Posterior vena cava (tissue), 2 donors: ENCODE measurements at regions of chr11 and their contacts with region 1.

Region 1: DNA sequence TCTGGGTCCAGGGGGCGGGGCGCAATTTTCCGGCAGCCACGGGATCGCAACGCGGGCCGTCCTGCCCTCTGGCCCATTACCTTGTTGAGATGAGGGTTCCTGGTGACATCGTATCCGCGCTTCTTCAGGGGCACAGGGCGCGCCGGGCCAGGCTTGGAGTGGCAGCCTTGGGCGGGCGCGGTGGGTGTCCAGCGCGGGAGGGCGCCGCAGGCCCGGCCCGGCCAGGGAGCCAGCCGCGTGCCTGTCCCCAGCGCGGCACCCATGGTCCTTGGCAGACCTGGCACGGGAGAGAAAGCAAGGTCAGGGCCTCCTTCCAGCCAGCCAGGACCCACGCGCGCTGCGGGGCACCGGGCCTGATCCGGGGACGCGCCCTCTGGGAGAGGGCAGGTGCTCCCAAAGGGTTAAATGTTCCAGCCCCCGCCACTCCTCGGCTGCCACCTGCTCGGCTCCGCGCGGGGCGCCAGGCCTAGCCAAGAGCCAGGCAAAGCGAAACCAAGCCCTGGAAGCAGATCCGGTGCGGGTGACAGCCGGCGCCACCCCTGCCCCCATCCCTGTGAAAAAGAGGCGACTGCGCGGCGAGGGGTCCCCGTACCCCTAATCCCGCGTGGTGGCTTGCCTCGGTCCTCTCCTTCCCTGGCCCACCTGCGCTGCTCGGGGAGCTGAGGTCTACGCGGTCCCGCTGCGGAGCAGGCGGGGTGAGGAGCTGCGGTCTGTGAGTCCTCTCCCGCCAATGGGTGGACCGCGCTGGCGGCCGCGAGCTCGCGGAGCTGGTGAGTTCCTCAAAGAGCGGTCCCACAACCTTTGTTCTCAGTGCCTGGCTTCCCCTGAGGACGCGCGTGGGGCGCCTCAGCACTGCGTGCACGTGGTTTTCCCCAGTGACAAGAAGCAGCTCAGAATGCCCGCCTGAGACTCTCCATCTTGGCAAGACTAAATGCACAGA is at the start of gene ME3:
- DNase-seq: peak; percentile 94
- total RNA-seq, gene ME3: 19.3 to 25.7 TPM

Region 2: GRCh38 chr11:86571273-86571948 is 100.5 kb before region 1 on chr11:
- intact Hi-C with region 1: no loop called
- DNase-seq: no peak

Region 3: DNA sequence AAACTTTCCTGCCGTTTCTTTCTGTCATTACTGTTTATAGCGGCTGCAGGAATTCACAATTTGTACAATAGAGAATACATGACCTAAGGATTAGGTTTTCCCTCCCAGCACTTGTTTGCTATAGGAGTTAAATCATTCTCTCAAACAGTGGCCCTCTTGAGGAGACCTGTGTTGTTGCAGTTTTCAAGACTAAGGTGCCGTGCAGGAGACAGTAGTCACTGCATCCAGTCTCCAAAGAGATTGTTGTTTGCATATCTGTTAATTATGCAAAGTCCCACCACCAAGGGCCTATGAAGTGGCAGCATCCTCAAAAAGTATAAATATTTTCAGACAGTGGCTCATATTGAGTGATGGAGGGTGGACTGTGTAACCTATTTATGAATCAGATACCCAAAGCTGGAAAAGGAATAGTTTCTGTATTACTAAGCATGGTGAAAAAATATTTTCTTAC is 130.7 kb after region 1 on chr11:
- intact Hi-C with region 1: loop called in 1 of 2 experiments (anchors 10 kb)
- DNase-seq: no peak